GM18951 (cell line): ENCODE measurements at regions of chr9 and their contacts with region 1.

Region 1: GRCh38 chr9:69199769-69200470 is 25.8 kb downstream of the TJP2 start:
- POLR2A ChIP-seq: no peak

Region 2: GRCh38 chr9:69056191-69056815 is 143.6 kb before region 1 on chr9:
- in situ Hi-C with region 1: loop called (anchors 10 kb)
- POLR2A ChIP-seq: no peak

Region 3: DNA sequence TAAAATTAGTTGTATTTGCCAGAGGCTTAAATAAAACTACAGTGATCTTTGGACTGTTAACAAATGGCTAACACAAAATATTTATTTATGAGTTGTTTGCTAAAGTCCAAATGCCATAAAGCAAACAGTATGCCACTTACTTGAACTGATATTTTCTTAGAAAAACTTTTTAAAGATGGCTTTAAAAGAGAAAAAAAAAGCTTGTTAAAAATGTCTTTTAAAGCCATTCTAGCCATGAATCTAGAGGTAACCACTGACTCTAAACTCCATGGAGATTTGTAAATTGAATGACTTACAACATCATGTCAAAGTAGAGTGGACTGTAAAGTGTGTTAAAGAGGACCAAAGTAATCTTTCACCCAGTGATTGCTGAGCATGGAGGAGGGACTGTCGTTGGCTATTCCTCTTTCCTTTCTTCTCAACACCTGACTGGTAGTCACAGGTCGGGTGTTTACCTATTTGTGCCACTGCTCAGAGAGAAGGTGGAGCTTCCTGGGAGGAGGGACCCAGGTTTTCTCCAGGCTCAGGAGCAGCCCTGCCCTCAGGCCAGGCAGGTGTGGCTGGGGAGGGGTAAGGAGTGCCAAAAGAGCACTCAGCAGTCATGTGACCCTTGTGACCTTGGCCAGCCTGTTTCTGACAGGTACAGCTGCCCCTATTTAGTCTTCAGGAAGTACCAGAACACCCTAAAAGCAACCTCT is 94.9 kb before region 1 on chr9:
- in situ Hi-C with region 1: no loop called
- POLR2A ChIP-seq: no peak

Region 4: GRCh38 chr9:69253057-69253456 is 53.1 kb after region 1 on chr9:
- in situ Hi-C with region 1: no loop called
- POLR2A ChIP-seq: no peak

Region 5: GRCh38 chr9:69391946-69392345 is 192.0 kb after region 1 on chr9:
- in situ Hi-C with region 1: no loop called
- POLR2A ChIP-seq: no peak